ENCODE measurements at regions of chr10 and their contacts with region 1.

Region 1: DNA sequence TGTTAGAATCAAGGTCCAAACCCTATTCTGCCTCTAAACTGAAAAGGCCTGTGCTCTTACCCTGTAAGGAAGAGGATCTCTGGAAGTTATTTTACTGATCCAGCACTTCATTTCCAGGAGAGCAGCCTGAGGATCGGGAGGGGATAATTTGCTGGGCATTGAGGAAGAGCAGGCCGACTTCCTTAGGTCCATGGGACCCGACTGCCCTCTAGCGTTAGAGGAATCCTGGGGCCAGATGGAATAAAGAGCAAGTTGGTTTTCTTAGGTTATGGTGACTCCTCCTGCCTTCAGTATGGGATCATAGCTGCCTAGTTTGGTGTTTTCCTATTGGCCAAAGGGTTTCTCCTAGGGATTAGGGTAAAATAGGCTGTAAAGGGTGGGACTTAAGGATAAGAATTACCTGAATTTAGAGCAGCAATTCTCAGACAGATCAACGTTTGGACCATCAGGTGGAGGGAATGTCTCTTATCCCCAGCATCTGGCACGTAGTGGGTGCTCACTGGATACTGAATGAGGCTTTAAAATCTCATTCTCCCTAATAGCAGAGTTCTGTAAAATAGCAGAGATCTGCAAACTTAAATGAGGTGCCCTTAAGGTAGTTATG is 40.0 kb upstream of the SORBS1 start:
- DNase-seq: peak; percentile 86
- ATAC-seq: peak; percentile 95
- H3K4me3 Mint-ChIP-seq: no peak overlapping the region
- H3K27ac Mint-ChIP-seq: no peak overlapping the region
- H3K4me1 Mint-ChIP-seq: peaks cover 14% of the 10 kb centered on the region
- H3K27me3 Mint-ChIP-seq: no peaks in the 10 kb centered on the region
- CTCF ChIP-seq: peak; percentile 81

Region 2: DNA sequence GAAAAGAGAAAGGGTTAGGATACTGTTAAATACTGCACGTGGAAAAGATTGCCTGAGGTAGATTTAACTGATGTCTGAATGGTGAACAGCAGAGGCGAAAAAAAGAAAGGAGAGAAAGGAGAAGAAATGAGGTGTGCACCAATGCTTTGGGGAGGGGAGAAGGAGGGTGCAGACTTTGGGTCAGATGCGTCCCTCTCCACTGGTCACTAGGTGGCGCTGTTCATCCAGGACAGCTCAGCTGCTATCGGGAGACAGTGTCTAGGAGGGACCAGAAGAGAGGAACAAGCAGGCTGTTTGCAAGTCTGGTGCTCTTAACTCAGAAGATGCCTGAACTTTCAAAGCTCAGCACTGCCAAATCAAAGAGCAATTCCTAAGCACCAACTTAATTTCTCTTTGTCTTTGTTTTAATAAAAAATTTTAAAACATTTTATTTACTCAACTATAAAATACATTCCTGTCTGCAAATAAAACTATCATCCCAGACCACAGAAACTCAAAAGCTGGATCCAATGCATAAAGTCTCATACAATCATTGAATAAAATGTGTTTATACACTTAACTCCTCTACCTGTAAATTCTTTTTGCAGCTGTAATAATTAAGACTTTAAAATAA is 226.5 kb before region 1 on chr10:
- CTCF ChIA-PET with region 1: interaction called, 79 read pairs
- POLR2A ChIA-PET with region 1: no interaction called
- DNase-seq: peak; percentile 86
- ATAC-seq: peak; percentile 98
- H3K4me3 Mint-ChIP-seq: no peak overlapping the region
- H3K27ac Mint-ChIP-seq: no peak overlapping the region
- H3K4me1 Mint-ChIP-seq: peaks cover 28% of the 10 kb centered on the region
- H3K27me3 Mint-ChIP-seq: no peaks in the 10 kb centered on the region
- CTCF ChIP-seq: peak; percentile 99

Region 3: GRCh38 chr10:95391581-95392216 is 209.5 kb before region 1 on chr10:
- CTCF ChIA-PET with region 1: interaction called, 17 read pairs
- POLR2A ChIA-PET with region 1: no interaction called
- DNase-seq: peak; percentile 55
- ATAC-seq: peak; percentile 94
- H3K4me3 Mint-ChIP-seq: no peak overlapping the region
- H3K27ac Mint-ChIP-seq: no peak overlapping the region
- H3K4me1 Mint-ChIP-seq: peaks cover 17% of the 10 kb centered on the region
- H3K27me3 Mint-ChIP-seq: no peaks in the 10 kb centered on the region
- CTCF ChIP-seq: no peak

Region 4: DNA sequence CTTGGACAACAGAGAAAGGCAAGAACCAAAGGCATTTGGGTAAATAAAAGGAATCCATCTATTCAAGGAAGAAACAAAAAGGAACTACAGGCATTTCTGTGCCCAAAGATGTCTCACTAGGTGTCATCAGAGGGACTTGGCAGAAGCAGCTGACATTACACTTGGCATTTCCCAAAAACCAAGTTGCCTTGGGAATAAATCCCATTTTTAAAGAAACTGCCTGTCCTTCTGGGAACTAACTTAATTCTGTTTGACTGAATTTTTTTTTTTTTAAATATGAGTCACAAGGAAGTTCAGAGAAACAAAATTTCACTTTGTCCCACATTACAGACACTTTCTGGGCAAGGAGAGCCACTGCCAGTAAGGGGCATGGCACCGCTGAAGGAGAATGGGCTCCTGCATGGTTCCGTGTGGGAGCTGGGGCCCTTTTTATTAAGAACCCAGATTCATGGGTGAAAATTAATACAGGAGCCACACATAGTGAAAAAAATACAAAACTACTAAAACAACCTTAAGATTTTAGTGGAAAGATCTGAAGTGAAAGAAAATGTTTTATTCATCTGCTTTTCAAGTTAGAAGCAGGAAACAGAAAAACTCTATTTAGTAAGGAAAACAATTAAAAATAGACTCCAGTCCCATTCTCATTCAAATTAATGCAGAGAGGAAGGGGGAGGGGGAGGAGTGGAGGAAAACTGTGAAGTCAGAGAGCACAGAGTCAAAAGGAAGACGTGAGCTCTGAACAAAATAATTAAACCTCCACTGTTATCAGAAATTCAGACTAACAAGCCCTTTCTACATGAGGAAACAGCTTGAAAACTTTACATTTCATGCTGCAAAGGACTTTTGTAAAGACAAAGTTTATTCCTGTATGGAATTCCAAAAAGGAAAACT is 192.0 kb before region 1 on chr10:
- CTCF ChIA-PET with region 1: interaction called, 14 read pairs
- POLR2A ChIA-PET with region 1: interaction called, 3 read pairs
- DNase-seq: no peak
- ATAC-seq: peak; percentile 12
- H3K4me3 Mint-ChIP-seq: peak overlapping the region; percentile 48
- H3K27ac Mint-ChIP-seq: peak overlapping the region; percentile 92
- H3K4me1 Mint-ChIP-seq: peaks cover 43% of the 10 kb centered on the region
- H3K27me3 Mint-ChIP-seq: no peaks in the 10 kb centered on the region
- CTCF ChIP-seq: no peak

Region 5: DNA sequence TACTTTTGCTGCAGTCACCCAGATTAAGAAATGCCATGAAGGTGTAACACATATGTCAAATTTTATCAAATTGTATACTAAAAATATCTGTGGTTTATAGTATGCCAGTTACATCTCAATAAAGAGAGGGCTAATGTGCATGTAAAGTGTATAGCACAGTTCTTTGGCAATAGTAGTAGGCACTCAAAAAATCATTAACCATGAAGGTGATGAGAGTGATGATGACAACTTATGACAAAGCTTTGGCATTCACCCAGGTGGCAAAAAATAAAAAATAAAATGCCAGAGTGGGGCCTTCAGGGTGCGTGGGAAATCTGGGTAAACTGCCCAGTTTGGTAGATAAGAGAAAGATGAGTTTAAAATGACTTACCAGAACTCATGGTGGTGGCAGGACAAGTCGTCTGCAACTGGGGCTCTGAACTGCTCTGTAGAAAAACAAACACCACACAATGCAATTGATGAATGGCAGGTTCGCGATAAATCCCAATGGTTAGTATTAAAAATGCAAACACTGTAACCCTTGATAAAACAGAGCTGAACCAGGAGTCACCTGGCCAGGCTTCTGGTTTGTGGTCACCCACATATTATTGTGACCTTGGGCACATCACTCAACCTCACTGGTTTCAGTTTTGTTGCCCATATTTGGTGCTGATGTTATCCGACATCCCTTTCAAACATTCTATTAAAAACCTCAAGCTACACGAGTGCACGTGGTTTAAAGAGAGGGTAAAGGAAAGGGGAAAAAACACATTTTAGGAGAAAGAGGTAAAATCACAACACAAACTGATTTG is 160.3 kb before region 1 on chr10:
- CTCF ChIA-PET with region 1: interaction called, 29 read pairs
- POLR2A ChIA-PET with region 1: no interaction called
- DNase-seq: no peak
- ATAC-seq: no peak
- H3K4me3 Mint-ChIP-seq: no peak overlapping the region
- H3K27ac Mint-ChIP-seq: no peak overlapping the region
- H3K4me1 Mint-ChIP-seq: peaks cover 6% of the 10 kb centered on the region
- H3K27me3 Mint-ChIP-seq: no peaks in the 10 kb centered on the region
- CTCF ChIP-seq: no peak

Region 6: DNA sequence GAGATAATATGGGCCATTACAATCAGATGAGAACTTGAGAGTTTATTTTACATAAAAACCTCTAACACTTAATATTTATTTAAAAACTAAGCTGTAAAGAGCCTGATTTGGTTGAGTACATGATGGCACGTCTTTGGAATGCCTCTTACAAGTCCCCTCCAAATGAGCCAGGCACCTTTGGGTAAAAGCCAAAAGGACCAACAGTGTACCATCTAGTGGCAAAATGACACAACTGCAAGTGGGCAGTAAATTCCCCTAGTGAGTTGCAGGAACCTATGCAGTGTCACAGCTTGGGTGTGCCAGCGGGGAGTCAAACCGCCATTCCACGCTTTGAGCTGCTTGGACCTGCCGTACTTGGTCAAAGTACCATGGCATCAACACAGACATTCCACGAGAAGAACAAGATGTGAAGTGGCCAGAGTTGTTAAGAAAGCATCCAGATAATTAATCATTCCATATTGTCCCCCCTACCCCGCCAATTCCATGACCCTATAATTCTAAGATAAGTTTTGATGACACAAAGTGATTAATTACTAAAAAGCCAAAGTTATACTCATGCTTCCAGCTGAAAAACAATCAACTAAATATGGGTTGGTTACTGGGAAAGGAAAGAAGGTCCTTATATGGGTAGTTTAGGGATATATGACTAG is 155.3 kb before region 1 on chr10:
- CTCF ChIA-PET with region 1: interaction called, 29 read pairs
- POLR2A ChIA-PET with region 1: no interaction called
- DNase-seq: peak; percentile 67
- ATAC-seq: peak; percentile 92
- H3K4me3 Mint-ChIP-seq: no peak overlapping the region
- H3K27ac Mint-ChIP-seq: no peak overlapping the region
- H3K4me1 Mint-ChIP-seq: peaks cover 15% of the 10 kb centered on the region
- H3K27me3 Mint-ChIP-seq: no peaks in the 10 kb centered on the region
- CTCF ChIP-seq: peak; percentile 74

Region 7: GRCh38 chr10:95478935-95479334 is 122.3 kb before region 1 on chr10:
- CTCF ChIA-PET with region 1: interaction called, 10 read pairs
- POLR2A ChIA-PET with region 1: no interaction called
- DNase-seq: no peak
- ATAC-seq: no peak
- H3K4me3 Mint-ChIP-seq: no peak overlapping the region
- H3K27ac Mint-ChIP-seq: no peak overlapping the region
- H3K4me1 Mint-ChIP-seq: peaks cover 69% of the 10 kb centered on the region
- H3K27me3 Mint-ChIP-seq: no peaks in the 10 kb centered on the region
- CTCF ChIP-seq: no peak

Region 8: GRCh38 chr10:95531994-95532399 is 69.2 kb before region 1 on chr10:
- CTCF ChIA-PET with region 1: no interaction called
- POLR2A ChIA-PET with region 1: no interaction called
- DNase-seq: no peak
- ATAC-seq: no peak
- H3K4me3 Mint-ChIP-seq: no peak overlapping the region
- H3K27ac Mint-ChIP-seq: peak overlapping the region; percentile 38; the same call in 1 of the 2 replicates
- H3K4me1 Mint-ChIP-seq: peaks cover 54% of the 10 kb centered on the region
- H3K27me3 Mint-ChIP-seq: no peaks in the 10 kb centered on the region
- CTCF ChIP-seq: no peak

Region 9: GRCh38 chr10:95646160-95646559 is 44.9 kb after region 1 on chr10:
- CTCF ChIA-PET with region 1: no interaction called
- POLR2A ChIA-PET with region 1: no interaction called
- DNase-seq: no peak
- ATAC-seq: no peak
- H3K4me3 Mint-ChIP-seq: no peak overlapping the region
- H3K27ac Mint-ChIP-seq: no peak overlapping the region
- H3K4me1 Mint-ChIP-seq: peaks cover 8% of the 10 kb centered on the region
- H3K27me3 Mint-ChIP-seq: no peaks in the 10 kb centered on the region
- CTCF ChIP-seq: no peak

Region 10: GRCh38 chr10:96413151-96413787 is 812.1 kb after region 1 on chr10:
- CTCF ChIA-PET with region 1: no interaction called
- POLR2A ChIA-PET with region 1: no interaction called
- DNase-seq: peak; percentile 66
- ATAC-seq: peak; percentile 80
- H3K4me3 Mint-ChIP-seq: no peak overlapping the region
- H3K27ac Mint-ChIP-seq: no peak overlapping the region
- H3K4me1 Mint-ChIP-seq: peaks cover 8% of the 10 kb centered on the region; the same call in 1 of the 2 replicates
- H3K27me3 Mint-ChIP-seq: no peaks in the 10 kb centered on the region
- CTCF ChIP-seq: peak; percentile 55; the same call in 1 of the 2 replicates